IMR-90 (cell line): ENCODE measurements at regions of chr20 and their contacts with region 1.

Region 1: DNA sequence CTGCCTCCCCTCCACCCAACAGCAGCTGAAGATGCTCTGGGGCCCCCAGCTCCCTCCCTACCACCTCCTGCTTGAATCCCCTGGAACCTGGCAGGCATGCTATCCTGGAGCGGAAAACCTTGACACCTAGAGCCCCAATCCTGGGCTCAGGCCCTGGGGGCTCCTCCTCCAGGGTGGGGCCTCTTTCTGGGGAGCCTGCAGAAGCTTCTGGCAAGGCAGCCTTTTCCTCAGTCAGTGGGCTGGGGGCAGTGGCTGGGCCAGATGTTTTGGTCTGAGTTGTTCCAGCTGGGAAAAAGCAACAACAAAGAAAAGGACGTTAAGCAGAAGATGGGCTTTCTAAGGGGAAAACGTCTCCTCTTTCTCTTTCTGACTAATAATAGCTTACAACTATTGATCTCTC is 21.1 kb downstream of the KIAA1755 start:
- DNase-seq: no peak
- ATAC-seq: no peak
- H3K4me3 ChIP-seq: no peak overlapping the region
- H3K27ac ChIP-seq: no peak overlapping the region
- H3K4me1 ChIP-seq: no peaks in the 10 kb centered on the region
- H3K27me3 ChIP-seq: peaks cover 2% of the 10 kb centered on the region; the same call in 1 of the 2 replicates
- CTCF ChIP-seq: no peak
- POLR2A ChIP-seq: no peak
- RAD21 ChIP-seq: no peak

Region 2: DNA sequence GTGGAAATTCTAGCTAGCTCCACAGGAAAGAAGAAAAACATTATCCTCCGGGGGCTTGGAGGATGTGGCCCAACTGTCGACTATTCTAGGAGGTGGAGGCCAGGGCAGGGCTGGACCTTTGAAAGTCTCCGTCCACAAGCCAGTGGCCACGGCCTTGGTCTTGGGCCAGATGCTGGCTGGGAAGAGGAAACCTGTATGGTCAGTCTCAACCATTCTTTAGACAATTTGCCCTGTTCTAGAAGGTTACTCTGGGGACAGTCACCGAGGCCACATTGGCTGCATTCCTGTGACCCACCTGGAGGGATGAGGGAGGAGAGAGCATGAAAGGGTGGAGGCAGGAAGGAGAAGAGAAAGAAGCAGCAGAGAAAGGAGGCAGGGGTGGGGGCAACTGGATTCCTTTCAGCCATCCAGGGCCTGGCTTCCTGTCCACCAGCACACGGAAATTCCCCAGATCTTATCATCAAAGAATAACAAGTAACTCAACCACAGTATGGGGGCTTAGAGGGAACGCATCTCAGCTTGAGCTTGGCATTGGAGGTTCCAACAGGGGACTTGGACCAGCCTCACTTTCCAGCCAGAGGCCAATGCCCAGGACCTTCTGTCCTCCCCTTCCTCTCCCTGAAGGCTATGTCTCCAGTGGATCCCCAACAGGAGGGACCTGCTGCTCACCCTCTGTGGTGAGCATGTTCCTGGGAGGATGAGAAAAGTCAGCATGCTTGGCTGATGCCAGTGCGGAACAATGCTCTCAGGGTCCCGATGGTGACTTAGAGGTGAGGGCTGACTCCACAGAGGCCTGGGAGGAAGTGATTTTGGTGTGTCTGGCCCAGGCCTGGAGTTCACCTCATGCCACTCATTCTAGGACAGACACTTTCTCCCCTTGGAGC is 104.8 kb before region 1 on chr20:
- CTCF ChIA-PET with region 1: no interaction called
- POLR2A ChIA-PET with region 1: no interaction called
- dilution Hi-C with region 1: no loop called
- in situ Hi-C with region 1: no loop called
- intact Hi-C with region 1: no loop called
- DNase-seq: peak; percentile 64
- ATAC-seq: peak; percentile 55
- H3K4me3 ChIP-seq: no peak overlapping the region
- H3K27ac ChIP-seq: peak overlapping the region; percentile 5; the same call in 1 of the 2 replicates
- H3K4me1 ChIP-seq: peaks cover 7% of the 10 kb centered on the region
- H3K27me3 ChIP-seq: no peaks in the 10 kb centered on the region
- CTCF ChIP-seq: no peak
- POLR2A ChIP-seq: no peak
- RAD21 ChIP-seq: no peak

Region 3: GRCh38 chr20:38412877-38413577 is 173.6 kb after region 1 on chr20:
- CTCF ChIA-PET with region 1: no interaction called
- POLR2A ChIA-PET with region 1: no interaction called
- dilution Hi-C with region 1: no loop called
- in situ Hi-C with region 1: loop called (anchors 5 kb)
- intact Hi-C with region 1: no loop called
- DNase-seq: no peak
- ATAC-seq: no peak
- H3K4me3 ChIP-seq: no peak overlapping the region
- H3K27ac ChIP-seq: no peak overlapping the region
- H3K4me1 ChIP-seq: no peaks in the 10 kb centered on the region
- H3K27me3 ChIP-seq: no peaks in the 10 kb centered on the region
- CTCF ChIP-seq: no peak
- POLR2A ChIP-seq: no peak
- RAD21 ChIP-seq: no peak